GM12878 (cell line): ENCODE measurements at regions of chr3 and their contacts with region 1.

Region 1: GRCh38 chr3:72847751-72848702 is at the start of gene SHQ1:
- DNase-seq: peak; percentile 81
- ATAC-seq: peak; percentile 88
- H3K4me3 ChIP-seq: peak within 1 kb of the TSS; percentile 97
- H3K27ac ChIP-seq: peak within 1 kb of the TSS; percentile 79
- H3K4me1 ChIP-seq: peaks cover 35% of the 10 kb centered on the region
- H3K27me3 ChIP-seq: no peaks in the 10 kb centered on the region
- CTCF ChIP-seq: no peak
- EP300 ChIP-seq: no peak
- POLR2A ChIP-seq: peak; percentile 88
- RAD21 ChIP-seq: no peak
- polyA plus RNA-seq, gene SHQ1: 12.6 to 12.8 TPM

Region 2: DNA sequence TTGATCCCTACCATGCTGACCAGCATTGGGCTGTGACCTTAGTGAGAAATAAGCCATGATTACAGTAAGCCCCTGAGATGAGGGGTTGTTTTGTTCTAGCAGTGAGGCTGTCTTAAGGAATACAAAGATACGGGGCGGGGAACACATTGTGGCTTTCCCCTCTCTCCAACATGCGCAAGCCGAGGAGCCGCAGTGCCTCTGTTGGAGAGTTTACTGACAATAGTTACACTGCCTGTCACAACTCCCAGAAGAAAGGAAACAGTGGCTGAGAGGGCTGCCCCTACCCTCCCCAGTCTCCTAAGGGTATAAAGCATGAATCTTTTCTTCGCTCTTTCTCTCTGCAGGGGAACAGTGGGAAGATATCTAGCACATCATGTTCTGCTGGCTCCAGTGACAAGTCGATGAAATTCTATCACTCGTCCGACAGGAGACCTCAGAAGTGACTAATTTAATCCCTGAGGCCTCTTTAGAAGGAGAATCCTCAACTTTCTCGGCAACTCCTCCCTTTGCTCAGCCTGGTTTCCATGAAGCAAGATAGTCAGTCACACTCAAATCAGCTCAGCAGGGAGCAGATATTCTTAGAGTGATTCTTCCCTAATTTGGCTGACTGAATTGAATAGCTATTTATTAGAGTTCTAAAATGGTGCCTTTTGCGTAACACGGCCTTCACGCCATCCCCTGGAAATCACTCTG is 654.1 kb before region 1 on chr3:
- CTCF ChIA-PET with region 1: no interaction called
- POLR2A ChIA-PET with region 1: no interaction called
- RAD21 ChIA-PET with region 1: no interaction called
- SMC1A ChIA-PET with region 1: no interaction called
- in situ Hi-C with region 1: no loop called
- intact Hi-C with region 1: no loop called
- DNase-seq: no peak
- ATAC-seq: no peak
- H3K4me3 ChIP-seq: no peak overlapping the region
- H3K27ac ChIP-seq: no peak overlapping the region
- H3K4me1 ChIP-seq: no peaks in the 10 kb centered on the region
- H3K27me3 ChIP-seq: no peaks in the 10 kb centered on the region
- CTCF ChIP-seq: no peak
- EP300 ChIP-seq: no peak
- POLR2A ChIP-seq: no peak
- RAD21 ChIP-seq: no peak

Region 3: GRCh38 chr3:72836923-72837322 is 11.1 kb before region 1 on chr3:
- CTCF ChIA-PET with region 1: interaction called, 3 read pairs
- POLR2A ChIA-PET with region 1: interaction called, 6 read pairs
- RAD21 ChIA-PET with region 1: no interaction called
- SMC1A ChIA-PET with region 1: interaction called, 11 read pairs
- in situ Hi-C with region 1: no loop called
- intact Hi-C with region 1: no loop called
- DNase-seq: no peak
- ATAC-seq: no peak
- H3K4me3 ChIP-seq: no peak overlapping the region
- H3K27ac ChIP-seq: no peak overlapping the region
- H3K4me1 ChIP-seq: no peaks in the 10 kb centered on the region
- H3K27me3 ChIP-seq: no peaks in the 10 kb centered on the region
- CTCF ChIP-seq: no peak
- EP300 ChIP-seq: no peak
- POLR2A ChIP-seq: no peak
- RAD21 ChIP-seq: no peak

Region 4: GRCh38 chr3:72860846-72861245 is 12.8 kb after region 1 on chr3:
- CTCF ChIA-PET with region 1: interaction called, 6 read pairs
- POLR2A ChIA-PET with region 1: no interaction called
- RAD21 ChIA-PET with region 1: interaction called, 4 read pairs
- SMC1A ChIA-PET with region 1: interaction called, 11 read pairs
- in situ Hi-C with region 1: no loop called
- intact Hi-C with region 1: no loop called
- DNase-seq: no peak
- ATAC-seq: no peak
- H3K4me3 ChIP-seq: no peak overlapping the region
- H3K27ac ChIP-seq: no peak overlapping the region
- H3K4me1 ChIP-seq: no peaks in the 10 kb centered on the region
- H3K27me3 ChIP-seq: no peaks in the 10 kb centered on the region
- CTCF ChIP-seq: no peak
- EP300 ChIP-seq: no peak
- POLR2A ChIP-seq: no peak
- RAD21 ChIP-seq: no peak

Region 5: DNA sequence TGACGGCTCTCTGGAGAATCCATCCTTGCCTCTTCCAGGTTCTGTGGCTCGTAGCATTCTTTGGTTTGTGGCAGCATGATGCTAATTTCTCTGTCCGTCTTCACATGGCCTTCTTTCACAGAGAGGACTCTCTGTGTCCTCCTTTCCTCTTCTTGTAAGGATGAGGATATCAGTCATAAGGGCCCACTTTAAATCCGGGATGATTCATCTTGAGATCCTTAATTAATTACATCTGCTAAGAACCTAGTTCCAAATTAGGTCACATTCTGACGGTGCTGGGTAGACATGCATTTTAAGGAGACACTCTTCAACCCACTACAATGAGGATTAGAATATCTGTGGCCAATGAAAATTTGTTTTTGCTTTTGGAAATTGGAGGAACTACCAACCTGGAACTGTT is 24.2 kb after region 1 on chr3:
- CTCF ChIA-PET with region 1: interaction called, 33 read pairs
- POLR2A ChIA-PET with region 1: no interaction called
- RAD21 ChIA-PET with region 1: interaction called, 3 read pairs
- SMC1A ChIA-PET with region 1: interaction called, 3 read pairs
- in situ Hi-C with region 1: no loop called
- intact Hi-C with region 1: no loop called
- DNase-seq: no peak
- ATAC-seq: peak; percentile 44
- H3K4me3 ChIP-seq: no peak overlapping the region
- H3K27ac ChIP-seq: no peak overlapping the region
- H3K4me1 ChIP-seq: no peaks in the 10 kb centered on the region
- H3K27me3 ChIP-seq: no peaks in the 10 kb centered on the region
- CTCF ChIP-seq: no peak
- EP300 ChIP-seq: no peak
- POLR2A ChIP-seq: no peak
- RAD21 ChIP-seq: no peak